Left cardiac atrium (tissue), 4 donors: ENCODE measurements at regions of chr15 and their contacts with region 1.

Region 1: DNA sequence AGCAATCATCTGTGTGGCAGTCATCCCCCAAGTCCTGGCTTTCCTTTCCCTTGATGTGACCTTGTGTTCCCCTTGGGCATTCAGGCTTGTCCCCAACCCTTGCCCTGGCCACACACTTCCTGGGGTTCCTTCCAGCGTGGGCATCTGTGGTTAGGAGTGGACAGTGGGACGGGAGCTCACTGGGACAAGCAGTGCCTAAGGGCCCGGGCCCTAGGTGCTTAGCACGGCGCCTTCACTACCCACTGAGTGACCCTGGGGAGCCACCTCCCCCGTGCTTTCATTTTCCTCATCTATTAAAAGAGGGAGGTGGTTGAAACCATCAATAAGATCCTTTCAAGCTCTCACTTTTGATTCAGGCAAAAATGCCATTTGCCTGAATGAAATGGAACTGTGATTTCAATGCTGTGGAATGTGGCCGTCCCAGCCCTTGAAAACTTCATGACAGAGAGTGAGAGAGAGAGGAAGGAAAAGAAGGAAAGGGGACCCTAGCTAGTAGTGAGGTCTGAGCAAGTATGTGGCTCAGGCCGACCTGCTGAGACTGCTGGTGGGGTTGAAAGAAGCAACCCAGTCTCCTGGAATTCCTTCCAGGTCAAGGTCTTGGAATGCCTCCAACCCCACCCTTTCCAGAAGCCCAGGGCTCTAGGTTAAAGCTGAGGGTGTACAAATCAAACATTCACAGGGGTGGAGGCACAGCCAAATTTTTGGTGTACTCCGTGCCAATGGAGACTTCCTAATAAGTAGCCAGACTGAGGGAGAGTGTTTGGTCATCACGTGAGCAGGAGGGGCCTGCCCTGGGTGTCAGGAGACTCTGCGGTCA is 302.9 kb downstream of the TLE3 start:
- DNase-seq: peak; percentile 50
- ATAC-seq: peak; percentile 67

Region 2: DNA sequence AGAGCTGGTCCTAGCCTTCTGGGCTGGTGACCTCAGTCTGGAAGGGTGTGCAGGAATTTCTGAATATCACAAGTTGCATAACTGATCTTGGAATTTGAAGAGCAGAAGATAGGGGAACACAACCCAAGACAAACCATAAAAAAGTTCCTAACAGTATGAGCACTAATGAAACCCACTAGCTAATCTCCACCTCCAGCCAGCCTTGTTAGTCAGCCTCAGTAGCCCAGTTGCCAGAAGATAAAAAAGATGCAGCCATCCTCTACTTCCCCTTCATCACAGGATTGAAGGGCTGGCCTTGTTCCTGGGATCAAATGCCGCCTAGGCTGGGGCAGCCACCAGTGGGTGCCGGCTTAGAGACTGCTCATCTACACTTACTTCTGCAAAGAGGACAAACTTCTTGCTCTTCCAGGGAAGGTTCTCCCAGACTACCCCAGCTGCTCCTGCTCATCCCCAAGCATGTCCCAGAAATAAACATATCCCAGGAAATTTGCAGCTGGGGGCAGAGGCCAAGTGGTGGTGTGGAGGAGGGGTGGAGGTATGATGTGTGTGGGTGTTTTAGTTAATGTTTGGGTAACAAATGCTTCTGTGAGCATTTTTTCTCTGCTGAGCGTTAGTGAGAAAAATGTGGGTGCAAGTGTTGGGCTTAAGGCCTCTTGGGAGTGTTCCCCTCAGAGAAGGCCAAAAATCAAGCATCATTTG is 1353.7 kb before region 1 on chr15:
- intact Hi-C with region 1: no loop called
- DNase-seq: no peak
- ATAC-seq: peak; percentile 66 to 75

Region 3: DNA sequence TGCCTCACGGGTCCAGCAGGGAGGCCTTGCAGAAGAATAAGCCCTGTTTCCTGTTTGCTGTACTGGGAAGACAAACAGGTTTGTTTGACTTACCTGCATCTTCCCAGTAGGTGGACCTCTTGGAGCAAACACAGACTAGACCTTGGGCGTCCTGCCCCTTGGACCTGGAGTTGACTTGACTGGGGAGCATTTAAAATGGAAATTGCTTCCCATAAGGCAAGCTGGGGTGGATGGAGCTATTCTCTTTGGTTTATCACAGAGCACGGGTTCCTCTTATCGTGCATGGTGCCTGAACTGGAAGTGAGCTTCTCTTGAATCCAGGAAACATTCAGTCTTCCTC is 190.8 kb before region 1 on chr15:
- intact Hi-C with region 1: loop called in 1 of 2 experiments (anchors 10 kb)
- DNase-seq: no peak
- ATAC-seq: no peak

Region 4: GRCh38 chr15:69853581-69853980 is 58.7 kb after region 1 on chr15:
- intact Hi-C with region 1: no loop called
- DNase-seq: no peak
- ATAC-seq: peak in 1 of 2 donors; percentile 78